H1 (cell line): ENCODE measurements at regions of chr10 and their contacts with region 1.

Region 1: DNA sequence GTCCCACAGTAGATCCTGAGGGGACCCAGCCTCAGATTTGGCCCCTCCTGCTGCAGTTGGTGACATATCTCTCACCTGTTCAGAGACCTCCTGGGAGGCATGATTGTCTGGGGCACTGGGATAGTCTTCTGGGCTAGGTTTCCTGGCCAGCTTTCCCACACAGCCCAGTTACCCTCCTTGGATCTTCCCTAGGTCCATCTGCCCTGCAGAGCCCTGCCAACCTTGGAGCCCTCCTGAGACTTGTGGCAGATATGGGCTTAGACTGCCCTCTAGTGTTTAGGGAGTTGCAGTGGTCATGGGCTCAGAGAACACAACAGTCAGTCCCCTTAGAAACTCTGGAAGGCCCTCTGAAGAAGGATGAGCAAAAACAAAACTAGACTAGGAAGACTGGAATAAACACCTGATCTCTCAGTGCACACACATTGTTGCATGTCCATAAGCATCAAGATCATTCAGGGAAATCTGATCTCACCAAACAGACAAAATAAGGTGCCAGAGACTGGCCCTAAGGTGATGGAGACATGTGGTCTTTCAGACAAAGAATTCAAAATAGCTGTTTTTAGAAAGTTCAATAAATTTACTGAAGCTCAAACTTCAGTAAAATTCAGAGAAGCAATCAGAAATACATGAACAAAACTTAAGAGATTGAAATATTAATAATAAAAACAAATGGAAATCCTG is 324.6 kb downstream of the ATRNL1 start:
- DNase-seq: peak; percentile 27 to 58
- H3K4me3 ChIP-seq: no peak overlapping the region
- H3K27ac ChIP-seq: no peak overlapping the region
- H3K4me1 ChIP-seq: no peaks in the 10 kb centered on the region
- H3K27me3 ChIP-seq: no peaks in the 10 kb centered on the region
- CTCF ChIP-seq: peak; percentile 61 to 93 (median 90)
- EP300 ChIP-seq: no peak
- POLR2A ChIP-seq: no peak
- RAD21 ChIP-seq: peak; percentile 95 to 98

Region 2: DNA sequence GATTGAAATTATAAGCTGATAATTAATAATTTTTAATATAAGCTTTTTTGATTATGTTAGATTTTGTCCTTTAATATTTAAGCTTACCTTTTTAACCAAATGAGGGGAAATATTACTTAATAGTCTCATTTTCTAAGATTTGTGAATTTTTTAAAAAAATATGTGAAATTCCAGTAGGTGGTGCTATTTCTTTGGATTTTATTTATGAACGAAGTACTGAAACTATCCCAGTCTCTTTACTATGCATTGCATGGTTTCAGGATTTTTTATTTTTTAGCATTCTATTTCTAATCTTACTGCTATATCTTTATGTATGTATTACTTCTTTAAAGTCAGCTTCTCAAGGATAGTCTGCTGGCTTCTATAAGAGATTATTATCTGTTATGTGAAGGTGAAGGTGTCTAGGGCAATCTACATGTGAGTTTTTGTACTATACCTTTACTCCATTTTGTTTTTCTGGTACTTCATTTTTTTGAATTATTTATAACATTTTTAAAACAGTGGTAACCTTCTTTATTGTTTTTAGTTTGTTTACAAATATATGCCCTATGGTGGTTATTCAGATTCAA is 246.2 kb before region 1 on chr10:
- CTCF ChIA-PET with region 1: interaction called, 18 read pairs
- POLR2A ChIA-PET with region 1: no interaction called
- DNase-seq: no peak
- H3K4me3 ChIP-seq: no peak overlapping the region
- H3K27ac ChIP-seq: no peak overlapping the region
- H3K4me1 ChIP-seq: no peaks in the 10 kb centered on the region
- H3K27me3 ChIP-seq: no peaks in the 10 kb centered on the region
- CTCF ChIP-seq: no peak
- EP300 ChIP-seq: no peak
- POLR2A ChIP-seq: no peak
- RAD21 ChIP-seq: peak in 1 of 2 experiments; percentile 17; a peak in 2 of 4 replicates

Region 3: DNA sequence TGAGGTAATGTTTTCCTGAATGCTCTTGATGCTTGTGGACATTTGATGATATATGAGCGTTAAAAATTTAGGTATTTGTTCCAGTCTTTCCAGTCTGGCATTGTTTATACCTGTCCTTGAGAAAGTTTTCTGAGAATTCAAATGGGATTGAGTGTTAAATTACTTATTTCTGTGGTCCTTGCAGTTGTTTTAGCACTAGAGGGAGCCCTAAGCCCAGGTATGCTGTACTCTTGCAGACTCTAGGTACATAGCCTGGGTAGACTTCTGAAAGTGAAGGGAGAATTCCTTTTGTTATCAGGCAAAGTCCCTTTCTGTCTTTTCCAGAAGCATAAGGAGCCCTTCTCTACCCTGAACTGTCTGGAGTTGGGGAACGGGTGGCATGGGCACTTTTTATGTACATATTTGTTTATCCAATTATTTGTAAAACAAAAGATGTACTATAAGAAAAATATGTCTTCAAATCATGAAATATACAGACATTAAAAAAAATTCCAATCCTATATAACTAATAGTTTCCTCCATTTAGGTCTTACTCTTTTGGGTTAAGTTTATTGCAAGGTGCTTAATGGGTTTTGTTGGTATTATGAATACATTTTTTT is 62.5 kb before region 1 on chr10:
- CTCF ChIA-PET with region 1: interaction called, 17 read pairs
- POLR2A ChIA-PET with region 1: no interaction called
- DNase-seq: peak in 1 of 2 experiments; percentile 49
- H3K4me3 ChIP-seq: no peak overlapping the region
- H3K27ac ChIP-seq: no peak overlapping the region
- H3K4me1 ChIP-seq: no peaks in the 10 kb centered on the region
- H3K27me3 ChIP-seq: no peaks in the 10 kb centered on the region
- CTCF ChIP-seq: peak in 2 of 3 experiments; percentile 72 to 82; a peak in 3 of 4 replicates
- EP300 ChIP-seq: no peak
- POLR2A ChIP-seq: no peak
- RAD21 ChIP-seq: peak; percentile 98 to 99

Region 4: GRCh38 chr10:115558252-115558651 is 140.5 kb after region 1 on chr10:
- CTCF ChIA-PET with region 1: no interaction called
- POLR2A ChIA-PET with region 1: no interaction called
- DNase-seq: no peak
- H3K4me3 ChIP-seq: no peak overlapping the region; a peak in 1 of 8 replicates
- H3K27ac ChIP-seq: no peak overlapping the region
- H3K4me1 ChIP-seq: peaks cover 0 to 2% (median 0%) of the 10 kb centered on the region in 4 experiments; a peak in 1 of 7 replicates
- H3K27me3 ChIP-seq: no peaks in the 10 kb centered on the region
- CTCF ChIP-seq: no peak
- EP300 ChIP-seq: no peak
- POLR2A ChIP-seq: no peak
- RAD21 ChIP-seq: no peak